Naive thymus-derived CD4-positive, alpha-beta T cell (primary cell): ENCODE measurements at regions of chr5 and their contacts with region 1.

Region 1: GRCh38 chr5:172770675-172771438 is at the start of gene DUSP1:
- DNase-seq: peak; percentile 94 to 99 (median 96)
- ATAC-seq: peak; percentile 64
- H3K4me3 ChIP-seq: peak within 1 kb of the TSS; percentile 81
- H3K4me3 Mint-ChIP-seq: peak within 1 kb of the TSS; percentile 89 to 97 (median 94)
- H3K27ac ChIP-seq: peak within 1 kb of the TSS; percentile 97
- H3K27ac Mint-ChIP-seq: peak within 1 kb of the TSS; percentile 97 to 100 (median 100)
- H3K4me1 ChIP-seq: peaks cover 26 to 39% of the 10 kb centered on the region in 2 donors
- H3K4me1 Mint-ChIP-seq: peaks cover 21 to 73% (median 63%) of the 10 kb centered on the region in 7 donors
- H3K27me3 ChIP-seq: no peaks in the 10 kb centered on the region
- H3K27me3 Mint-ChIP-seq: no peaks in the 10 kb centered on the region
- total RNA-seq, gene DUSP1: 5.4 to 2,522 (median 40.7) TPM

Region 2: DNA sequence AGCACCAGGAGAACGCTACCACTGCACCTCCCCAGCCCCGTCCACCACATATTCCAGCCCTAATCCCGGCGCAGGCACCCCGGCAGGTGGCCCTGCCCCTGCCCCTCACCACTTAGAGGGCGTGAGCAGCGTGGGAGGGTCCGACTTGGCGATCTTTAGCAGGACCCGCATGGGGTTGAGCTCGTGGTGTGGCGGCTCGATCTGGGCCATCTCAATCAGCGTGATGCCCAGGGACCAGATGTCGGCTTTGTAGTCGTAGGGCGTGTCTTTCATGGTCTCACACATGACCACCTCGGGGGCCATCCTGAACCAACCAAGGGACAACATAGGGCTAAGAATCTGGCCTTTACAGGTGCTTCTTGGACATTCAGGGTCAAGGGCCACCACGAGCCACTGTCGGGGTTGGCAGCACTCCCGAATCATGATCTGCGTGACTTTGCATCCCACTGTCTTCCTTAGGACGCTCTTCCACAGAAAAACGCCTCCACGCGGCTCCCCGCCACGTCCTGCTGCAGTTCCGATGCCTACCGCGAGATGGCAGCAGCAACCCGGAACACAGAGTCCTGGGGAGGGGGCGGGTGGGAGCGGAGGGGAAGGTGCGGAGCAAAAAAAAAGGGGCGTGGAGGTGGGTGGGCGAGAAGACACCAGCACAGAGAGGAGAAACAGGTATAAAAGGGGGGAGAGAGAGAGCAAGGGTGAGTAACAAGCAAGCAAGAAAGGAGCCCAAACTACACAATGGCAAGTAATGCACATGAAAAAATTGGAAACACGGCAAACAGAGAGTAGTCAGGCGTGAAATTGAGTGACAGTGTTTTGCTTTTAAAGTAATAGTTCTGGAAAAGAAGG is 664.1 kb before region 1 on chr5:
- CTCF ChIA-PET with region 1: no interaction called
- POLR2A ChIA-PET with region 1: no interaction called
- intact Hi-C with region 1: loop called in 1 of 2 experiments (anchors 5 kb)
- DNase-seq: peak; percentile 31 to 78 (median 59)
- ATAC-seq: peak; percentile 43
- H3K4me3 ChIP-seq: no peak overlapping the region
- H3K4me3 Mint-ChIP-seq: peak overlapping the region in 8 of 10 donors; percentile 20 to 49 (median 39)
- H3K27ac ChIP-seq: peak overlapping the region; percentile 24
- H3K27ac Mint-ChIP-seq: peak overlapping the region; percentile 18 to 88 (median 81)
- H3K4me1 ChIP-seq: peaks cover 31 to 37% of the 10 kb centered on the region in 2 donors
- H3K4me1 Mint-ChIP-seq: peaks cover 23 to 61% (median 43%) of the 10 kb centered on the region in 7 donors
- H3K27me3 ChIP-seq: no peaks in the 10 kb centered on the region
- H3K27me3 Mint-ChIP-seq: no peaks in the 10 kb centered on the region

Region 3: DNA sequence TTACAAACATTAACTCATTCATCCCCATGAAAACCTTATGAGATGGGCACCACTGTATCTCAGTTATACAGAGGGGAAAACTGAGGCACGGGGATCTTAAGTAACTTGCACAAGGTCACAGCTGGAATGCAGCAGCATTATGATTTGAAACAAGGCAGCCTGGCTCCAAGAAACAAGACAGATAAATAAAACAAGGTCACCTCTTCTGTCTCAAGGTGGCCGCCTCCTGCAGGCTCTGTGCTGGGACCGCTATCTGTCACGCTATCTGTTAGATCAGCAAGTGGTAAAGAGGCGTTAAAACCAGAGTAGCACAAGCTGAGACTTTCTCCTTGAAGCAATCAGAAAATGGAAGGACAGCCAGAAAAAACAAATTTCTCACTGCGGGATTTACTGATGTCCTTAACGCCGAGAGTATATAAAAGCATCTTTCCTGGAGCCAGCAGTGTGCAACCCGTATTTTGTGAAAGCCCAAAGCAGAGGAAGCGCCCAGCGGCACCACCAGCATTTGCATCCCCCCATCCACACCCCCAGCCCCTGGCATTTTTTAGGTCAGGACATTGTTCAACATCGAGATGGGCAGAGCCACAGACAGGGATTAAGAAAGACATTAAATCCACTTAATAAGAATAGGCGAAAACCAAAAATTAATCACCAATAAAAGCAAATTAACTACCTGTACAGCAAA is 48.6 kb before region 1 on chr5:
- CTCF ChIA-PET with region 1: interaction called, 11 read pairs
- POLR2A ChIA-PET with region 1: interaction called, 7 read pairs
- intact Hi-C with region 1: loop called in 1 of 2 experiments (anchors 1 kb)
- DNase-seq: no peak
- ATAC-seq: peak; percentile 85
- H3K4me3 ChIP-seq: no peak overlapping the region
- H3K4me3 Mint-ChIP-seq: peak overlapping the region in 1 of 10 donors; percentile 45
- H3K27ac ChIP-seq: no peak overlapping the region
- H3K27ac Mint-ChIP-seq: no peak overlapping the region
- H3K4me1 ChIP-seq: peaks cover 0 to 23% of the 10 kb centered on the region in 2 donors
- H3K4me1 Mint-ChIP-seq: peaks cover 0 to 10% (median 0%) of the 10 kb centered on the region in 7 donors
- H3K27me3 ChIP-seq: no peaks in the 10 kb centered on the region
- H3K27me3 Mint-ChIP-seq: peaks cover 0 to 5% (median 0%) of the 10 kb centered on the region in 5 donors

Region 4: GRCh38 chr5:172833686-172834414 is 63.0 kb after region 1 on chr5 and contains the start of gene ERGIC1:
- CTCF ChIA-PET with region 1: interaction called, 23 read pairs
- POLR2A ChIA-PET with region 1: interaction called, 61 read pairs
- intact Hi-C with region 1: loop called in 1 of 2 experiments (anchors 1 kb)
- DNase-seq: peak; percentile 49 to 84 (median 58)
- ATAC-seq: peak; percentile 87
- H3K4me3 ChIP-seq: peak within 1 kb of the TSS; percentile 68
- H3K4me3 Mint-ChIP-seq: peak within 1 kb of the TSS; percentile 85 to 93 (median 90)
- H3K27ac ChIP-seq: peak within 1 kb of the TSS; percentile 87
- H3K27ac Mint-ChIP-seq: peak within 1 kb of the TSS; percentile 87 to 97 (median 94)
- H3K4me1 ChIP-seq: peaks cover 23 to 38% of the 10 kb centered on the region in 2 donors
- H3K4me1 Mint-ChIP-seq: peaks cover 25 to 50% (median 40%) of the 10 kb centered on the region in 7 donors
- H3K27me3 ChIP-seq: no peaks in the 10 kb centered on the region
- H3K27me3 Mint-ChIP-seq: no peaks in the 10 kb centered on the region
- total RNA-seq, gene ERGIC1: 44.4 to 71.3 (median 53.5) TPM

Region 5: DNA sequence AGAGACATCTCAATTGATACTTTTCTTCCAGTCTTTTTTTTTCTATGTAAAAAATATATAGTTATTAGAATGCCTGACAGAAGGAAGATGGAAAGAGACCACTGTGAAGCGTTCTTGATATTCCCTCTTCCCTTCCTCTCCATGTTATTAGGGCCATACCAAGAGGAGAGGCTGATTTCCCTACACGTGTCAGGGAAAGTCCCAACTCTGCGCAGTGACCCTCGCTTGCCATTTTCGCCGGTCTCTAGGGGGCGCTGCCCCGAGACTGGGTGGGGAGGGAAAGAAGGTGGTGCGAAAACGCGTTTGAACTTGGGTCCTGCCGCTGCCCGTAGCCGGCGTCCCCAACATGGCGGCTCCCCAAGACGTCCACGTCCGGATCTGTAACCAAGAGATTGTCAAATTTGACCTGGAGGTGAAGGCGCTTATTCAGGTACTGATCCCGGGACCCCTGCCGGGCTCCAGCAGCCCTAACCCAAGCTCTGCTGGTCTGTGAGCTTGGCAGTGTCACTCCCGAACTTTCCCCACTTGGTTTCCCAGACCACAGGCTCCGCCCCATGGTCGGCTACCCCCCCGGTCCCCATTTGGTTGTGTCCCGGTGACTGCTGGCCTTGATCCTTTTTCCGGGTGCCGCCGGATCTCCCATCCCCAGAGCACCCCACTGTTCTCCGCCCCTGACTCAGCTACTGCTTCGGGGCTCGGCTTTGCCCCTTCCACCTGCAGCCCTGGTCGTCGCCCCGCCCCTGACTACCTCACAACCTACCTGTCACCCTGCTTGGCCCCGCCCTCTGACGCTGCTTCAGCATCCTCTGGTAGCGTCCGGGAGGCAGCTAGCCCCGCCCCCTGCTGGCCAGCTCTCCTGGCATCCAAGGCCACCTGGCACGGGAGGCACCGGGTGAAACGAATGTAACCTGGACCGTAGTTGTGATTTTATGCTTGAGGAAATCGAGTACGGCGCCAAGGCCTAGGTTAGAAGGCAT is 373.6 kb after region 1 on chr5 and contains the start of gene BNIP1:
- CTCF ChIA-PET with region 1: no interaction called
- POLR2A ChIA-PET with region 1: interaction called, 3 read pairs
- intact Hi-C with region 1: loop called in 1 of 2 experiments (anchors 1 kb)
- DNase-seq: peak; percentile 92 to 99 (median 96)
- ATAC-seq: peak; percentile 94
- H3K4me3 ChIP-seq: peak within 1 kb of the TSS; percentile 100
- H3K4me3 Mint-ChIP-seq: peak within 1 kb of the TSS; percentile 93 to 99 (median 97)
- H3K27ac ChIP-seq: peak within 1 kb of the TSS; percentile 98
- H3K27ac Mint-ChIP-seq: peak within 1 kb of the TSS; percentile 96 to 99 (median 98)
- H3K4me1 ChIP-seq: no peaks in the 10 kb centered on the region
- H3K4me1 Mint-ChIP-seq: peaks cover 5 to 21% (median 16%) of the 10 kb centered on the region in 7 donors
- H3K27me3 ChIP-seq: no peaks in the 10 kb centered on the region
- H3K27me3 Mint-ChIP-seq: no peaks in the 10 kb centered on the region
- total RNA-seq, gene BNIP1: 5.5 to 23.2 (median 15.3) TPM

Region 6: GRCh38 chr5:173887610-173888472 is 1117.0 kb after region 1 on chr5 and contains the start of gene CPEB4:
- CTCF ChIA-PET with region 1: no interaction called
- POLR2A ChIA-PET with region 1: interaction called, 4 read pairs
- intact Hi-C with region 1: loop called (anchors 5 to 10 kb)
- DNase-seq: peak; percentile 89 to 98 (median 97)
- ATAC-seq: peak; percentile 97
- H3K4me3 ChIP-seq: peak within 1 kb of the TSS; percentile 70
- H3K4me3 Mint-ChIP-seq: peak within 1 kb of the TSS; percentile 91 to 99 (median 96)
- H3K27ac ChIP-seq: peak within 1 kb of the TSS; percentile 82
- H3K27ac Mint-ChIP-seq: peak within 1 kb of the TSS; percentile 94 to 100 (median 98)
- H3K4me1 ChIP-seq: peaks cover 49 to 60% of the 10 kb centered on the region in 2 donors
- H3K4me1 Mint-ChIP-seq: peaks cover 61 to 88% (median 78%) of the 10 kb centered on the region in 7 donors
- H3K27me3 ChIP-seq: no peaks in the 10 kb centered on the region
- H3K27me3 Mint-ChIP-seq: no peaks in the 10 kb centered on the region
- total RNA-seq, gene CPEB4: 12.6 to 40.4 (median 17.5) TPM